Endothelial cell of umbilical vein (primary cell): ENCODE measurements at regions of chr14 and their contacts with region 1.

Region 1: GRCh38 chr14:50804181-50804721 is 26.7 kb downstream of the NIN start:
- DNase-seq: peak; percentile 78
- H3K4me3 ChIP-seq: no peak overlapping the region
- H3K27ac ChIP-seq: peak overlapping the region; percentile 78
- H3K4me1 ChIP-seq: peaks cover 54% of the 10 kb centered on the region
- H3K27me3 ChIP-seq: no peaks in the 10 kb centered on the region
- CTCF ChIP-seq: no peak
- POLR2A ChIP-seq: no peak

Region 2: GRCh38 chr14:50778721-50779483 is 25.3 kb before region 1 on chr14:
- CTCF ChIA-PET with region 1: interaction called, 20 read pairs
- POLR2A ChIA-PET with region 1: no interaction called
- dilution Hi-C with region 1: no loop called
- intact Hi-C with region 1: no loop called
- DNase-seq: no peak
- H3K4me3 ChIP-seq: no peak overlapping the region
- H3K27ac ChIP-seq: no peak overlapping the region
- H3K4me1 ChIP-seq: peaks cover 32% of the 10 kb centered on the region
- H3K27me3 ChIP-seq: no peaks in the 10 kb centered on the region
- CTCF ChIP-seq: no peak
- POLR2A ChIP-seq: no peak

Region 3: GRCh38 chr14:50785457-50786063 is 18.7 kb before region 1 on chr14:
- CTCF ChIA-PET with region 1: interaction called, 10 read pairs
- POLR2A ChIA-PET with region 1: no interaction called
- dilution Hi-C with region 1: no loop called
- intact Hi-C with region 1: no loop called
- DNase-seq: no peak
- H3K4me3 ChIP-seq: no peak overlapping the region
- H3K27ac ChIP-seq: no peak overlapping the region
- H3K4me1 ChIP-seq: peaks cover 19% of the 10 kb centered on the region
- H3K27me3 ChIP-seq: no peaks in the 10 kb centered on the region
- CTCF ChIP-seq: no peak
- POLR2A ChIP-seq: no peak

Region 4: GRCh38 chr14:50816395-50817047 is 12.3 kb after region 1 on chr14:
- CTCF ChIA-PET with region 1: no interaction called
- POLR2A ChIA-PET with region 1: interaction called, 4 read pairs
- dilution Hi-C with region 1: no loop called
- intact Hi-C with region 1: loop called (anchors 1 kb)
- DNase-seq: peak; percentile 73
- H3K4me3 ChIP-seq: no peak overlapping the region
- H3K27ac ChIP-seq: peak overlapping the region; percentile 67
- H3K4me1 ChIP-seq: peaks cover 11% of the 10 kb centered on the region
- H3K27me3 ChIP-seq: no peaks in the 10 kb centered on the region
- CTCF ChIP-seq: no peak
- POLR2A ChIP-seq: no peak

Region 5: DNA sequence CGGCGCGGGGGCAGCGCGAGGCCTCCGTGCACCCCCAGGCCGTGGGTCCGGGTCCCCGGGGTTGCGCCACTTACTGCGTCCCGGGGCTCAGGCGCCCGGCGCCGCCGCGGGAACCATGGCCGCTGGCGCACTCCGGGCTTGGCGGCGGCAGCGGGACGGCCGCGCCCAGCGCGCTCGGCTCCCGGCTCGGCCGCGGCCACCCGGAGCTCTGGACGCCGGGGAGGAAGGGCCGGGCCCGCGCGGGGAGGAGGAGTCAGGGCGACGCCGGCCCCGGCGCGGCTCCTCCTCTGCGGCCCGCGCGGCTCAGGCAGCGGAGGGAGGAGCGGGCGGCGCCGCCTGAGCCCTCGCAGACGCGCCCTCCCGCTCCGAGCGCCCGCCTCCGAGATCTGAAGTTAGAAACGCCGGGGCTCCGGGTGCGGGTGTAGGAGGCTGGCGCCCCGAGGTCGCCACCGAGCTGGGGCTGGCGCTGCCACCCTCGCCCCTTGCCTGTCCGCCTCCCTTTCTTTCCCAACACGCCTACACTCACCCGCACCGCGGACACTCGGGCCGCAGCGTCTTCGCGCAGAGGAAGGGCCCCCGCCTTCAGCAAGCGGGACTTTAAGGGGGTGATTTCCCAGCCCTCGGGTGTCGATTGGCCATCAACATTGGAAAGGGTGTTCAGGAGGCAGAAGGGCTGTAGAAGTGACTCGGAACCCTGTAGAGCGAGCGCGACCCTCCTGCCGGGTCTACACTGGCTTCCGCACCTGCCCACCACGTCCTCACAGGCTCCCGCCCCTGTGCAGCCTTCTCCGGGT is 26.9 kb after region 1 on chr14 and contains the start of gene NIN:
- CTCF ChIA-PET with region 1: interaction called, 5 read pairs
- POLR2A ChIA-PET with region 1: no interaction called
- dilution Hi-C with region 1: no loop called
- intact Hi-C with region 1: loop called (anchors 2 kb)
- DNase-seq: peak; percentile 71
- H3K4me3 ChIP-seq: peak within 1 kb of the TSS; percentile 67 to 92 (median 69)
- H3K27ac ChIP-seq: peak within 1 kb of the TSS; percentile 61
- H3K4me1 ChIP-seq: peaks cover 20% of the 10 kb centered on the region
- H3K27me3 ChIP-seq: no peaks in the 10 kb centered on the region
- CTCF ChIP-seq: no peak
- POLR2A ChIP-seq: peak; percentile 60
- total RNA-seq, gene NIN: 68.2 and 76.3 TPM in 2 replicates

Region 6: GRCh38 chr14:50871914-50872732 is 67.9 kb after region 1 on chr14 and contains the start of gene ABHD12B:
- CTCF ChIA-PET with region 1: no interaction called
- POLR2A ChIA-PET with region 1: no interaction called
- dilution Hi-C with region 1: no loop called
- intact Hi-C with region 1: no loop called
- DNase-seq: no peak
- H3K4me3 ChIP-seq: peak within 1 kb of the TSS in 1 of 3 experiments; percentile 31
- H3K27ac ChIP-seq: no peak within 1 kb of the TSS
- H3K4me1 ChIP-seq: no peaks in the 10 kb centered on the region
- H3K27me3 ChIP-seq: peaks cover 48 to 71% of the 10 kb centered on the region in 2 experiments
- CTCF ChIP-seq: no peak
- POLR2A ChIP-seq: no peak
- total RNA-seq, gene ABHD12B: not detected in 2 replicates

Region 7: DNA sequence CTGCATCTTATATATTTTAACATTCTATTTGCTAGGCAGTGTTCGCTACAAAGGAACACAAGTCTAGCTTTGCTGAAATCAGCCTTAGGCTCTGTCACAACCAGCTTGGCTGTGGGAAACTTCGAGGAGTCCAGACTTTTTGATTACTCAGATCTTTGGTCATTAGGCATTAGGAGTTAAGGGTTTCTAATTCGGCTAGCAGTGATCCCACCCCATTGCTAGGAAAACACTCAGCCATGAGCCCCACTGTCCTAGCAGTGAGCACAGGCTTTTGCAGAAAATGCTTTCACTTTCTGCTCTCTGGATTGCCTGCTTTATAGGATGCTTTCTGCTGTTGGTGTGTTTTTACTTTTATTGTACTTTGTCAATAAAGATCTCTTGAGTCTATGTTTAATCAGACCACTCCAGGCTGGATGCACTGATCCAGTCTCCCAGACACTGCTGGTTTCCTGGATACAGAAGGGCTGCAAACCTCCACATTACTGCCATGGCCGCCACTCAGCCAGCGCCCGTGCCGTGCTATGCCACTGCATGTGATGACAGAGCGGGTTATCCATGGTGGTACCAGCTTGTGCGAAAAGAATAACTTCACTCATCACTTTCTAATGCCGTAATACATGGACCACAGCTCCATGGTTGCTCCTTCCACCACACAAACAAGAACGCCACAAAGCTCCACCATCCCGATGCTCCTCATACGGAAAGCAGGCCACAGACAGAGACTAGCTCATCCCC is 181.0 kb after region 1 on chr14:
- CTCF ChIA-PET with region 1: no interaction called
- POLR2A ChIA-PET with region 1: no interaction called
- dilution Hi-C with region 1: no loop called
- intact Hi-C with region 1: no loop called
- DNase-seq: no peak
- H3K4me3 ChIP-seq: no peak overlapping the region
- H3K27ac ChIP-seq: no peak overlapping the region
- H3K4me1 ChIP-seq: no peaks in the 10 kb centered on the region
- H3K27me3 ChIP-seq: peaks cover 19 to 37% of the 10 kb centered on the region in 2 experiments
- CTCF ChIP-seq: no peak
- POLR2A ChIP-seq: no peak

Region 8: GRCh38 chr14:51419685-51420084 is 615.4 kb after region 1 on chr14:
- CTCF ChIA-PET with region 1: no interaction called
- POLR2A ChIA-PET with region 1: no interaction called
- dilution Hi-C with region 1: no loop called
- intact Hi-C with region 1: no loop called
- DNase-seq: no peak
- H3K4me3 ChIP-seq: no peak overlapping the region
- H3K27ac ChIP-seq: no peak overlapping the region
- H3K4me1 ChIP-seq: peaks cover 9% of the 10 kb centered on the region
- H3K27me3 ChIP-seq: no peaks in the 10 kb centered on the region
- CTCF ChIP-seq: no peak
- POLR2A ChIP-seq: no peak